ENCODE measurements at regions of chr2 and their contacts with region 1.

Region 1: GRCh38 chr2:45649858-45650811 is 1.3 kb upstream of the PRKCE start:
- DNase-seq: no peak
- H3K4me3 ChIP-seq: peak overlapping the region; percentile 53
- CTCF ChIP-seq: no peak

Region 2: GRCh38 chr2:45554073-45554741 is 95.9 kb before region 1 on chr2:
- in situ Hi-C with region 1: no loop called
- DNase-seq: no peak
- H3K4me3 ChIP-seq: no peak overlapping the region
- CTCF ChIP-seq: no peak

Region 3: DNA sequence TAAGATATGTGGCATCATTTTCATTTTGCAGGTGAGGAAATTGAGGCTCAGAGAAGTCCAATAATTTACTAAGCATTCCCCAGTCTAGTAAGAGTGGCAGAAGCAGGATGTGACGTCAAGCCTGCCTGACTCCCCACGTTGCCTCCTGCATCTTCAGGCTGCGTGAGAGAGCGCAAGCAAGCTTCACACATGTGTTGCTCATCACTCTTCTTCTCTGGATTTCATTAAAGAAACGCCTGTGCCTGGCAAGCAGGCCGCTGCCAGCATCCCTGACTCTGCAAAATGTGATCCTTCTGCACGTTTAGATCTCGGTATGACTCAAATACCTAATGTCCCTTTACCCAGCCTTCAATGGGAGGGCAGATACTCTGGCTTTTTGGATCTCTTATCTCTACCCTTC is 98.1 kb after region 1 on chr2:
- in situ Hi-C with region 1: loop called (anchors 5 kb)
- DNase-seq: no peak
- H3K4me3 ChIP-seq: no peak overlapping the region
- CTCF ChIP-seq: no peak

Region 4: GRCh38 chr2:45935791-45936622 is 285.9 kb after region 1 on chr2:
- in situ Hi-C with region 1: loop called (anchors 5 kb)
- DNase-seq: peak; percentile 89
- H3K4me3 ChIP-seq: no peak overlapping the region
- CTCF ChIP-seq: peak; percentile 78